SK-N-SH (cell line): ENCODE measurements at regions of chr22 and their contacts with region 1.

Region 1: GRCh38 chr22:24391836-24392217 is 35.6 kb upstream of the ADORA2A start:
- DNase-seq: peak; percentile 50
- H3K4me3 ChIP-seq: no peak overlapping the region
- H3K27ac ChIP-seq: peak overlapping the region; percentile 62 to 99
- H3K4me1 ChIP-seq: peaks cover 17 to 49% of the 10 kb centered on the region in 2 experiments
- H3K27me3 ChIP-seq: no peaks in the 10 kb centered on the region
- CTCF ChIP-seq: no peak
- EP300 ChIP-seq: no peak
- RAD21 ChIP-seq: no peak

Region 2: GRCh38 chr22:24305260-24305692 is 86.6 kb before region 1 on chr22:
- CTCF ChIA-PET with region 1: no interaction called
- POLR2A ChIA-PET with region 1: no interaction called
- DNase-seq: no peak
- H3K4me3 ChIP-seq: no peak overlapping the region
- H3K27ac ChIP-seq: peak overlapping the region; percentile 16 to 51; a peak in 3 of 4 replicates
- H3K4me1 ChIP-seq: peaks cover 8 to 10% of the 10 kb centered on the region in 2 experiments; a peak in 2 of 4 replicates
- H3K27me3 ChIP-seq: no peaks in the 10 kb centered on the region
- CTCF ChIP-seq: no peak
- EP300 ChIP-seq: no peak
- RAD21 ChIP-seq: no peak

Region 3: DNA sequence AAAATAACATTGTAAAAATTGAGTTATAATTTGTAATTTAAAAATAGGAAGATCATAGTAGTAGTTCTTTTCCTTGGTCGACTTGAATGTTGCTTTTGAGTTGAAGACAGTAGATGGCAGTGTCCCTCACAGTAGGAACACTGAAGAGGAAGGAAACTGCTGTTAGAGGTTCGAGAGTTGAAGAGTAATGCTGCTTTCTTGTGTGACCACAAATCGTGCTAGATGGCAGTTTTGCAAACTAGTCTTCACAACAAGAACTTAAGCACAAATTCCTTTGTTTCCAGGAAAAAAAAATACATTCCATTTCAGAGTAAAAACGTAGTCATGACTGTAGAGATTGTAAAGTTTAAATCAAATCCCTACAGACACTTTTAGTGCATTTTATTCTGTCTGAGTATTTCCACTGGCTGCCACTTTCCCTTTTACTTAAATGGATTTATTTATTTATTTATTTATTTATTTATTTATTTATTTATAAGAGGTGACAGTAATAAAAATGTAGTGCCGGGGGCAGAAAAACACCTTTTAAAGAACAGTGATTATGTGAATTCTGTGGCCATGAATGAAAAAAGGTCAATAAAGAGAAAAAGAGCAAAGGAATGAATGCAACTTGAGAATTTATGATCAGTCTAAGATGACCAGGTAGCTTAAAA is 66.6 kb before region 1 on chr22:
- CTCF ChIA-PET with region 1: interaction called, 24 read pairs
- POLR2A ChIA-PET with region 1: interaction called, 10 read pairs
- DNase-seq: peak; percentile 42
- H3K4me3 ChIP-seq: no peak overlapping the region
- H3K27ac ChIP-seq: peak overlapping the region; percentile 80 to 97
- H3K4me1 ChIP-seq: peaks cover 19 to 45% of the 10 kb centered on the region in 2 experiments; a peak in 3 of 4 replicates
- H3K27me3 ChIP-seq: no peaks in the 10 kb centered on the region
- CTCF ChIP-seq: peak; percentile 80
- EP300 ChIP-seq: peak in 1 of 2 experiments; percentile 27; a peak in 1 of 4 replicates
- RAD21 ChIP-seq: peak; percentile 95

Region 4: GRCh38 chr22:24379536-24379935 is 12.3 kb before region 1 on chr22:
- CTCF ChIA-PET with region 1: interaction called, 8 read pairs
- POLR2A ChIA-PET with region 1: interaction called, 15 read pairs
- DNase-seq: no peak
- H3K4me3 ChIP-seq: peak overlapping the region in 1 of 2 experiments; percentile 23; a peak in 1 of 4 replicates
- H3K27ac ChIP-seq: peak overlapping the region; percentile 75 to 88
- H3K4me1 ChIP-seq: peaks cover 10 to 20% of the 10 kb centered on the region in 2 experiments
- H3K27me3 ChIP-seq: no peaks in the 10 kb centered on the region
- CTCF ChIP-seq: no peak
- EP300 ChIP-seq: peak in 1 of 2 experiments; percentile 54; a peak in 1 of 4 replicates
- RAD21 ChIP-seq: no peak

Region 5: DNA sequence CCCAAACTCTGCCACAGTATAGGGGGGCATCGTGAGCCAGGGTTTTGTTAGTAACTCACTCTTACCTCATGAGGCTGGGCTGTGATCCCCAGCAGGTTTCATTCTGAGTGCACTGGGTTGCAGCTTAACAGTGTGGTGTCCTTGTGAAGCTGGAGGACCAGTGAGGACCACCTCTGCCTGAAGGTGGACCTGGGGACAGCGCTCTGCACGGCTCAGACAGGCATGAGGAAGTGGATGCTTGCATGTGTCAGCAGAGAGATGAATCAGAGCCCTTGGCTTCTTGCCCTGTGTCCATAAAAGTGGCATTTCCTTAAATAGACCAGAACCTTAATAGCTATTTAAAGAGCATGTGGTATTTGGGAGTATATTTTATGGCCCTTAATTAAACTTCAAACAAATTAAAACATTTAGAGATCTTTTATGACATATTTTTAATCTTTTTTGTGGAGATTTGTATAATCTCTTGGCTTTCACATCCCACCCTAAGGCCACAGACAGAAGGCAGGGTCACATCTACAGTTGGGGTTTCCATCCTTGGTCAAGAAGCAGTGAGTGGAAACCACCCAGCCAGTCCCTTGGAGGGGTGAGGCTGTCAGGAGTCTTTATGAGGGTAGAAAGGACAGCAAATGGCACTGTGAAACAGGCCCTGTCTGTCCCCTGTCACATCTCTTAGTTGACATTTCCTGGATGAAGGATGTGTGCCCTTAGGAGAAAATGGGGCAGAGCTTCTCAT is 10.8 kb after region 1 on chr22:
- CTCF ChIA-PET with region 1: interaction called, 15 read pairs
- POLR2A ChIA-PET with region 1: interaction called, 25 read pairs
- DNase-seq: peak; percentile 75
- H3K4me3 ChIP-seq: peak overlapping the region in 1 of 2 experiments; percentile 9; a peak in 1 of 4 replicates
- H3K27ac ChIP-seq: peak overlapping the region; percentile 78 to 100
- H3K4me1 ChIP-seq: peaks cover 30 to 82% of the 10 kb centered on the region in 2 experiments
- H3K27me3 ChIP-seq: no peaks in the 10 kb centered on the region
- CTCF ChIP-seq: no peak
- EP300 ChIP-seq: peak; percentile 75 to 91; a peak in 3 of 4 replicates
- RAD21 ChIP-seq: peak; percentile 44

Region 6: GRCh38 chr22:24410110-24410856 is 18.5 kb after region 1 on chr22:
- CTCF ChIA-PET with region 1: interaction called, 10 read pairs
- POLR2A ChIA-PET with region 1: interaction called, 16 read pairs
- DNase-seq: peak; percentile 6
- H3K4me3 ChIP-seq: no peak overlapping the region
- H3K27ac ChIP-seq: peak overlapping the region in 1 of 2 experiments; percentile 18; a peak in 1 of 4 replicates
- H3K4me1 ChIP-seq: peaks cover 6 to 50% of the 10 kb centered on the region in 2 experiments; a peak in 2 of 4 replicates
- H3K27me3 ChIP-seq: no peaks in the 10 kb centered on the region
- CTCF ChIP-seq: no peak
- EP300 ChIP-seq: no peak
- RAD21 ChIP-seq: no peak